Panc1 (cell line): ENCODE measurements at regions of chr15 and their contacts with region 1.

Region 1: GRCh38 chr15:51162865-51163762 is 68.4 kb upstream of the TNFAIP8L3 start:
- DNase-seq: peak; percentile 61
- ATAC-seq: peak; percentile 93
- H3K4me3 ChIP-seq: no peak overlapping the region
- H3K27ac ChIP-seq: no peak overlapping the region
- H3K4me1 ChIP-seq: peaks cover 7% of the 10 kb centered on the region
- H3K27me3 ChIP-seq: no peaks in the 10 kb centered on the region
- CTCF ChIP-seq: peak; percentile 97

Region 2: DNA sequence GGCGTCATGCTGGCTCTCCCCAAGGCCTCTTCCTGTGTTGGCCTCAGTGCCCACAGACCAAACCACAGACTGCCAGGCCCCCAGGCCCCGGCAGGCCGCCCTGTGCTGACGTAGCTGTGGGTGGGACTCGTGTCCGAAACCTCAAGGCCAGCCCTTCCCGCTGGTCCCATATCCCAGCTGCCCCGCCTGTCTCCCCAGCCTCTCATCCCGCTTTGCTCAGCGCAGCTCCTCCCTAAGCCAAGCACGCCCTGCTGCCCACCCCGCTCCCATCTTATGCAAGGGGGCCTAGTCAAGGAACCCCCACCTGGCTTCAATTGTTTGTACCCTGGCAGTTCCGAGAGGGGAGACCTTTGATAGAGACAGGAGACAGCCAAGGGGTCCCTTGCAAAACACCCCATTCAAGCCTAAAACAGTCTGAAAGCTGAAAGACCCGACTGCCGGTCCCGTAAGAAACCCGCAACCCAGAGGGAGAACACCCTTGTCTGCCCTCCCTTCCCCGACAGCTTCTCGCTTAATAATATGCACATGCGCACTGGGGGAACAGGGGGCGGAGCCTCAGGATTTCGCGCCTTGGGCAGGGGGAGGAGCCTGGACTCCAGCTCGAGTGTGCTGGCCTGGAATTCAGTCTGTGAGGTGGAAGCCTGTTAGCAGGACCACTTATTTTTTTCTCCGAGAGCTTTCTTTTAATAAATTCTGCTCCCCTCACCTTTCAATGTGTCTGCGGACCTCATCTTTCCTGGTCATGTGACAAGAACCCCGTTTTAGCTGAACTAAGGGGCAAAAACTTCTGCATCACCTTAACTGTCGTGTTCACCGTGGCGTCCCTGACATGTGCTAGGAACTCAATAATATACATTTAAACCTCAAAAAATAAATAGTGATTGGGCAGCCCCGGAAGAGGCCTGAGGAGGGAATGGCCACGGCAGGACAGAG is 85.6 kb before region 1 on chr15:
- CTCF ChIA-PET with region 1: interaction called, 10 read pairs
- POLR2A ChIA-PET with region 1: no interaction called
- in situ Hi-C with region 1: no loop called
- intact Hi-C with region 1: no loop called
- DNase-seq: no peak
- ATAC-seq: no peak
- H3K4me3 ChIP-seq: no peak overlapping the region
- H3K27ac ChIP-seq: no peak overlapping the region
- H3K4me1 ChIP-seq: no peaks in the 10 kb centered on the region
- H3K27me3 ChIP-seq: no peaks in the 10 kb centered on the region
- CTCF ChIP-seq: no peak

Region 3: GRCh38 chr15:51192521-51193280 is 29.6 kb after region 1 on chr15:
- CTCF ChIA-PET with region 1: interaction called, 24 read pairs
- POLR2A ChIA-PET with region 1: no interaction called
- in situ Hi-C with region 1: no loop called
- intact Hi-C with region 1: loop called (anchors 1 kb)
- DNase-seq: peak; percentile 71
- ATAC-seq: peak; percentile 98
- H3K4me3 ChIP-seq: no peak overlapping the region
- H3K27ac ChIP-seq: no peak overlapping the region
- H3K4me1 ChIP-seq: no peaks in the 10 kb centered on the region
- H3K27me3 ChIP-seq: no peaks in the 10 kb centered on the region
- CTCF ChIP-seq: peak; percentile 96

Region 4: GRCh38 chr15:51229907-51230330 is 66.8 kb after region 1 on chr15:
- CTCF ChIA-PET with region 1: interaction called, 16 read pairs
- POLR2A ChIA-PET with region 1: no interaction called
- in situ Hi-C with region 1: no loop called
- intact Hi-C with region 1: no loop called
- DNase-seq: no peak
- ATAC-seq: peak; percentile 60; the same call in 1 of the 2 replicates
- H3K4me3 ChIP-seq: no peak overlapping the region
- H3K27ac ChIP-seq: no peak overlapping the region
- H3K4me1 ChIP-seq: no peaks in the 10 kb centered on the region
- H3K27me3 ChIP-seq: no peaks in the 10 kb centered on the region
- CTCF ChIP-seq: peak; percentile 43

Region 5: GRCh38 chr15:51380999-51381795 is 218.1 kb after region 1 on chr15:
- CTCF ChIA-PET with region 1: interaction called, 13 read pairs
- POLR2A ChIA-PET with region 1: no interaction called
- in situ Hi-C with region 1: no loop called
- intact Hi-C with region 1: loop called (anchors 2 kb)
- DNase-seq: peak; percentile 71
- ATAC-seq: peak; percentile 93
- H3K4me3 ChIP-seq: no peak overlapping the region
- H3K27ac ChIP-seq: no peak overlapping the region
- H3K4me1 ChIP-seq: no peaks in the 10 kb centered on the region
- H3K27me3 ChIP-seq: 0 out of 2 replicates have a peak, but pooled peaks cover 5% of the 10 kb centered on the region
- CTCF ChIP-seq: peak; percentile 91

Region 6: DNA sequence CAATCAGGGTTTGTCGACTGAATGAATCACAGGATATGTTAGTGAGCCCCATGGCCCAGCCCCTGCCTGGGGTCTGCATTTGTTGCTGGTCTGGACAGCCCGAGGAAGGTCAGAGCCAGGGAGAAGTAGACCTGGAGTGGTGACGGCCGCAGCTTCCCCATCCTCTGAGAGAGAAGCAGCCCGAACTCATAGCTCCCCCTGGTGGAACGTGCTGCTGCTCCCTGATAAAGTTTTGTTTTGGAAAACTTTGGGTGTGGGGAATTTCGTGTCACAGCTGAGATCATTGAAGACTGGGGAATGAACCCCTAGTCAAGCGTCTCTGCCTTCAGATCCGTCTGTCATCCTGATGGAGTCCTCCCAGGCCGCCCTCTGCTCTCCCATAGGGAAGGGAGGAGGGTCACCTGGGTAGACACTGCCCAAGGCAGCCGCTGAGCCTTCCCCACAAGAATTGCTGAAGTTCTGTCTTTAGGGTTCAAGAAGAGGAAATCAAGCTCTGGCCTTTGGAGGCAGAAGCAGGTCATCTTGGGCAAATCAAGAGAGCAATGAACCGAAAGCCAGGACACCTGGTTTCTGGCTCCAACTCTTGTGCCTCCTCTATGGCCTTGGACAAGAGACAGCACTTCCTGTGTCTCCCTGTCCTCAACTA is 238.9 kb after region 1 on chr15:
- CTCF ChIA-PET with region 1: interaction called, 5 read pairs
- POLR2A ChIA-PET with region 1: no interaction called
- in situ Hi-C with region 1: no loop called
- intact Hi-C with region 1: loop called (anchors 2 kb)
- DNase-seq: no peak
- ATAC-seq: 0 out of 2 replicates have a peak, but pooled peaks have one; percentile 50
- H3K4me3 ChIP-seq: no peak overlapping the region
- H3K27ac ChIP-seq: no peak overlapping the region
- H3K4me1 ChIP-seq: no peaks in the 10 kb centered on the region
- H3K27me3 ChIP-seq: peaks cover 9% of the 10 kb centered on the region
- CTCF ChIP-seq: peak; percentile 79